HCT116 (cell line): ENCODE measurements at regions of chr1 and their contacts with region 1.

Region 1: GRCh38 chr1:17984583-17984982 is 123.0 kb upstream of the IGSF21 start:
- DNase-seq: peak; percentile 28
- ATAC-seq: peak; percentile 88
- H3K4me3 ChIP-seq: no peak overlapping the region
- H3K27ac ChIP-seq: no peak overlapping the region
- H3K4me1 ChIP-seq: no peaks in the 10 kb centered on the region
- H3K27me3 ChIP-seq: peaks cover 26% of the 10 kb centered on the region
- CTCF ChIP-seq: peak; percentile 52 to 84 (median 80); a peak in 5 of 6 replicates
- POLR2A ChIP-seq: no peak
- RAD21 ChIP-seq: peak; percentile 65

Region 2: DNA sequence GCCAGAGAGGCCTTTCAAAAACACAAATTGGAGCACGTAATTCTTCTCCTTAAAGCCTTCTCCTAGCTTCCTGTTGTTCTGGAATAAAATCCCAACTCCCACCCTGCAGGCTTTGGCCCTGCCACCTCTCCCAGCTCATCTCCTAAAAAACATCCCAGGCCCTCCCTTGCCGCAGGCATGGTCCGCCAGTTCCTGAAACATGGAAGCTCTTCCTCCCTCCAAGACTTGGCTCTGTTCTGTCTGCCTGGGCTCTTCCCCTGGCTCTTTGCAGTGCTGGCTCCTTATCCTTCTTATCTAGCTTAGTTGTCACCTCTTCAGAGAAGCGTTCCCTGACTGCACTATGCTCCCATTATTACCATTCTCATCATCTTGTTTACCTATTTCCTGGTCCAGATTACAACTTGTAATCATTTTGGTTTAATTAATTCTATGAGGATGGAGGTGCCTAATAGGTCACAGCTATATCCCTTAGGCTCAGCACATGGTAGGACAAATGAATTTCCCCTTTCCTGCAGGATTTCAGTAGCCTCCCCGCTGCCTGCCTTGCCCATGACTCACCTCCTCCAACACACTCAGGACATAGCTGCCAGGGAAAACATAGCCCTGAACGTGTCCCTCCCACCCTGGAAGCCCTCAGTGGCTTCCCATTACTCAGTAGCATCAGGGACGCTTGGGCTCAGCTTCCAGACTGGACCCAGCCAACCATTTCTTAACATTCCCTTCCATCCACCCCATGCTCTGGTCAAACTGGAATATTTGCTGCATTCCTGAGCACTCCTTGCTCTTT is 107.3 kb after region 1 on chr1:
- CTCF ChIA-PET with region 1: no interaction called
- POLR2A ChIA-PET with region 1: no interaction called
- RAD21 ChIA-PET with region 1: no interaction called
- intact Hi-C with region 1: loop called (anchors 10 kb)
- DNase-seq: no peak
- ATAC-seq: peak; percentile 67
- H3K4me3 ChIP-seq: no peak overlapping the region
- H3K27ac ChIP-seq: no peak overlapping the region
- H3K4me1 ChIP-seq: peaks cover 14 to 15% of the 10 kb centered on the region in 2 experiments
- H3K27me3 ChIP-seq: no peaks in the 10 kb centered on the region
- CTCF ChIP-seq: no peak
- POLR2A ChIP-seq: no peak
- RAD21 ChIP-seq: no peak

Region 3: DNA sequence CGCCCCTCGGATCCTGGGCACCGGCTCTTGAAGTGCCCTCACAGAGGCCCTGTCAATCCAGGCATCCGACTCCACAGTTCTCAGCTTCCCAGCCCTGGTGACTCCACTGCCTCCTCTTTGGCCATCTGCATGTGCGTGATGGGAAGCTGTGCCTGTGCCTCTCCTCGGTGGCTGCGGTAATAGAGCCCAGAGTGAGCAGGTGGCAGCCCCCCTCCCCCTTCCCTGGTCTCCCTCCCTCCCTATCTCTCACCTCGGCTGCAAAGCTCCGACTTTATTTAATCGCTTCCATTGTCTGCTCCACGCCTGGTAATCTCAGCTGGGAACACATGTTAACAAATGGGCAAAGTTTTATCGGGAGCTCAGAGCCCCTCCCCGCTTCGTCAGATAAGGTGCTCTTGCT is 214.9 kb after region 1 on chr1:
- CTCF ChIA-PET with region 1: interaction called, 5 read pairs
- POLR2A ChIA-PET with region 1: no interaction called
- RAD21 ChIA-PET with region 1: no interaction called
- intact Hi-C with region 1: loop called (anchors 5 kb)
- DNase-seq: no peak
- ATAC-seq: no peak
- H3K4me3 ChIP-seq: no peak overlapping the region
- H3K27ac ChIP-seq: no peak overlapping the region
- H3K4me1 ChIP-seq: no peaks in the 10 kb centered on the region
- H3K27me3 ChIP-seq: peaks cover 95% of the 10 kb centered on the region
- CTCF ChIP-seq: no peak
- POLR2A ChIP-seq: no peak
- RAD21 ChIP-seq: no peak